ENCODE measurements at regions of chr9 and their contacts with region 1.

Region 1: GRCh38 chr9:13427587-13427986 is 148.1 kb upstream of the MPDZ start:
- DNase-seq: peak in 1 of 3 donors; percentile 42
- ATAC-seq: no peak
- H3K4me3 ChIP-seq: no peak overlapping the region
- H3K4me1 ChIP-seq: no peaks in the 10 kb centered on the region
- CTCF ChIP-seq: peak; percentile 40

Region 2: DNA sequence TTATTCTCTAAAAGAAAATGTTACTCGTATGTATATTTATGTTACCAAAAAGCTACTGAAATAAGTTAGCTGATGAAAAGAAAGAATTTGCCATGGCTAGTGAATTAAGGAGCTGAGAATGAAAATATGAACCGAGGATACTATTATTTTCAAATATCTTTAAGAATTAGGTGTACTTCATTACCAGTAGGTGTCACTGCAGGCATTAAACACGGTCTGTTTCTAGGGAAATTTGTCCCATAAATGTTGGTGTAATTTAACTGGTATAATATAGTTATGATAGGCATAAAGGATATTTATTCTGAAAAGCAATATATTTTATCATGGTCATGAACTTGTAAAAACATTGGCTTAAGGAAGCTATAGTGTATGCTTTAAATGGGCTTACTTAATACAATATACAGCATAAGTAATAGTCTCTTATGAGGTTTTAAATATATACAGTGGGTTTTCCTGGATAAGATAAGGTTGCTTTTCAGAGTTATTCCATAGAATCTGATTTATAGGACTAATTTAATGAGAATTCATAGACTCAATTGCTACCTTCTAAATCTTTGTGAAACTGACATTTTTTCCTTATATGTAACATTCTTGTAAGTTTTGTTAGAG is 75.7 kb before region 1 on chr9:
- intact Hi-C with region 1: loop called in 1 of 2 experiments (anchors 10 kb)
- DNase-seq: no peak
- ATAC-seq: no peak
- H3K4me3 ChIP-seq: no peak overlapping the region
- H3K4me1 ChIP-seq: no peaks in the 10 kb centered on the region
- CTCF ChIP-seq: no peak

Region 3: DNA sequence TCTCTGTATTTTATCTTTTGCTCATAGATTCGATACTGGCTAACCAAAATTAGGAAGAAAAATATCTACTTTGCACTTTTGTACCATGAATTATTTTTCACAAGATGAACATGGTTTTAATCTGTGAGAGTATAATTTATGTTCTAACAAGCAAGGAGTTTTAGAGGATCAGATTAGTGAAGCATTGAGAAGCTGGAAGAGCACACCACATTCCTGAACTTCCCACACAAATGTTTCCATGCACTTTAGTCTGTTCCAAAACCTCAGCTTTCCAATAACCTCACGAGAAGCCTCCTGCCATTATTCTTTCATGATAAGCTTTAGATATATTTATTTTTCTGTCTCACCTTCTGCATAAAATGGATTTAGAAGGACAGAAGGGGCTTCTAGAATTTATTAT is 49.4 kb before region 1 on chr9:
- intact Hi-C with region 1: no loop called
- DNase-seq: no peak
- ATAC-seq: no peak
- H3K4me3 ChIP-seq: no peak overlapping the region
- H3K4me1 ChIP-seq: no peaks in the 10 kb centered on the region
- CTCF ChIP-seq: no peak

Region 4: GRCh38 chr9:14353222-14354056 is 925.9 kb after region 1 on chr9:
- intact Hi-C with region 1: loop called in 1 of 2 experiments (anchors 5 kb)
- DNase-seq: peak; percentile 83 to 98 (median 92)
- ATAC-seq: peak; percentile 87
- H3K4me3 ChIP-seq: no peak overlapping the region
- H3K4me1 ChIP-seq: peaks cover 10% of the 10 kb centered on the region
- CTCF ChIP-seq: peak; percentile 72